Endothelial cell of umbilical vein (primary cell): ENCODE measurements at regions of chr21 and their contacts with region 1.

Region 1: DNA sequence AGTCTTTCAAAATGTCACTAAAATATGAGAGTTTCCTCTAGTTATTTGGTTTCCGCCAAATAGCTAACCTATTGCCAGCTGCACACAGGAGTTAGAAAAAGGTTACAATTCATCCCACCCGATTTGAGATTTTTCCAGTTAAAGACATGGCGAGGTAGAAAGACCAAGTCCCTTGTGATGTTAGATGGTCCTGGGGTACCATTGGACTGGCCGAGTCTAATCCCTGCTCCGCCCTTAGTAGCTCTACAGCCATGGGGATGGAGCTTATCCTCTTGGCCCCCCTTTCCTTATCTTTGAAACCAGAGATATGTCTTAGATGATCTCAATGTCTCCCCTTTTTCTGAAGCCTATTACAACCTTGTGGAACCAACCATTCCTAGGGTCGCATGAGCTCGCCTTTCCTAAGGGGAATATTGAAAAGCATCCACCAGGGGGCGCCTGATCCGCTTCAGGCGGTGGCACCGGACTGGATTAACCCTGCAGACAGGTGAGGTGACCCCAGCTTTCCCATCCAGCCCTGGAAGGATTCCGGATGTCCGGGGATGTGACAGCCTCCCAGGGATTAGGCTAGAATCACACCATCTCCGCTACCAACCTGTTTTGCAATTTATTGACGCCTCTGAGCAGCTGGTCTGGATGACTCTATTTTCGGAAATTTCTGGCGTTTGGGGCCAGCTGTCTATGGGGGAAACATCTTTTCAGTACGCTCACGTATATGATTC is 68.3 kb upstream of the SIM2 start:
- DNase-seq: peak; percentile 36
- H3K4me3 ChIP-seq: no peak overlapping the region
- H3K27ac ChIP-seq: no peak overlapping the region
- H3K4me1 ChIP-seq: no peaks in the 10 kb centered on the region
- H3K27me3 ChIP-seq: peaks cover 12 to 13% of the 10 kb centered on the region in 2 experiments
- CTCF ChIP-seq: peak; percentile 73 to 76
- POLR2A ChIP-seq: no peak

Region 2: DNA sequence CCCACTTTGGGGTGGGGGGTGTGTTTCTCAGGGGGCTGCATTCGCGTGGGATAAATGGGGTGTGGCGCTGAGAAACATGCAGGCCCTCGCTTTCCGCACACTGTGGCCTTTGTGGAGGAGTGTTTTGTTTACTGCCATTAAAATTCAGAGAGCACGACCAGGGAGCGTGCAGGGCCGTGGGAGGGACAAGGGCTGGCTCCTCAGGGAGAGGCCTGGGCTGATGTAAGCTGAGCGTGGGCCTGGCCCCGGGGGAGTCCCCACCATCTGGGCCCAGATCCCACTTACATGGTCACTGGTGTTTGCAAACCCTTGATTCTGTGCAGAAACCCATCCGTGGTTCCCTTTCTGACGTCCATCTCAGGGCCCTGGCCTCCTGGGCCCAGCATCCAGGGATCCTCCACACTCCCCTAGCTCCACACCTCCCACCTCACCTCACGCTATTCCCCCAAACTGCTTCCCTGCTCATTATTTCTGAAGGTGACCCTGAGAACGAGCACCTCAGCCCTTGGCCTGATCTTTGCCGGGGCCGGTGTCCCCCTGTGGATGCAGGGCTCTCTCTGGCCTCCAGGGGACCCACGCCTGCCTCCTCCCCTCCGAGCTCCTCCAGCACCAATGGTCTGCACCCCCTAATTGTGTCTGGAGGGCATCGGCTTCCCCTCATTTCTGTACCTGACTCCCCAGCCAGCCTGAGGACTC is 24.2 kb before region 1 on chr21:
- CTCF ChIA-PET with region 1: interaction called, 48 read pairs
- POLR2A ChIA-PET with region 1: no interaction called
- dilution Hi-C with region 1: no loop called
- intact Hi-C with region 1: no loop called
- DNase-seq: no peak
- H3K4me3 ChIP-seq: no peak overlapping the region
- H3K27ac ChIP-seq: no peak overlapping the region
- H3K4me1 ChIP-seq: peaks cover 3% of the 10 kb centered on the region
- H3K27me3 ChIP-seq: peaks cover under 1 to 5% of the 10 kb centered on the region in 2 experiments
- CTCF ChIP-seq: no peak
- POLR2A ChIP-seq: no peak

Region 3: DNA sequence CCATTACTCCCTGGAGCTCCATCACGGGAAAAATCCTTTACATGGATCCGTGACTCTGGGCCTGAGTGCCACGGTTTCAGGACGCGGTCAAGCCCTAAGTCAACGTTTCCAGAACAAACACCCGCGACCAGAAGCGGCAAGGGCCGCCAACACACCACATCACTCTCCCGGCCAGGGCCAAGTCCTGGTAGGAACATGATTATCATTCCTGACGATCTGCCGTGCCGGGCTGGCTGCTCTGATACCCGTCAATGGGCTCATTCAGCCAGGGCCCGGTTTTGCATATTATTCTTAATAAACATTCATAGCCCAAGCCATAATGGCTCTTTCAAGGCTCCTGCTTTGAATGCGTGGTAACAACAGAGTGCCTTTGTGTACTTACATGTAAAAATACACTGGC is 23.7 kb after region 1 on chr21:
- CTCF ChIA-PET with region 1: interaction called, 20 read pairs
- POLR2A ChIA-PET with region 1: no interaction called
- dilution Hi-C with region 1: no loop called
- intact Hi-C with region 1: no loop called
- DNase-seq: no peak
- H3K4me3 ChIP-seq: no peak overlapping the region
- H3K27ac ChIP-seq: no peak overlapping the region
- H3K4me1 ChIP-seq: no peaks in the 10 kb centered on the region
- H3K27me3 ChIP-seq: peaks cover 9 to 12% of the 10 kb centered on the region in 2 experiments
- CTCF ChIP-seq: no peak
- POLR2A ChIP-seq: no peak

Region 4: GRCh38 chr21:36698981-36699891 is 68.6 kb after region 1 on chr21 and contains the start of gene SIM2:
- CTCF ChIA-PET with region 1: interaction called, 10 read pairs
- POLR2A ChIA-PET with region 1: no interaction called
- dilution Hi-C with region 1: no loop called
- intact Hi-C with region 1: no loop called
- DNase-seq: no peak
- H3K4me3 ChIP-seq: peak within 1 kb of the TSS in 1 of 3 experiments; percentile 6
- H3K27ac ChIP-seq: no peak within 1 kb of the TSS
- H3K4me1 ChIP-seq: peaks cover 23% of the 10 kb centered on the region
- H3K27me3 ChIP-seq: peaks cover 88 to 98% of the 10 kb centered on the region in 2 experiments
- CTCF ChIP-seq: no peak
- POLR2A ChIP-seq: no peak
- total RNA-seq, gene SIM2: not detected in 2 replicates

Region 5: GRCh38 chr21:36854391-36854790 is 223.7 kb after region 1 on chr21:
- CTCF ChIA-PET with region 1: interaction called, 18 read pairs
- POLR2A ChIA-PET with region 1: no interaction called
- dilution Hi-C with region 1: no loop called
- intact Hi-C with region 1: loop called (anchors 1 kb)
- DNase-seq: peak; percentile 47
- H3K4me3 ChIP-seq: no peak overlapping the region
- H3K27ac ChIP-seq: no peak overlapping the region
- H3K4me1 ChIP-seq: peaks cover 4% of the 10 kb centered on the region
- H3K27me3 ChIP-seq: no peaks in the 10 kb centered on the region
- CTCF ChIP-seq: peak; percentile 64 to 68
- POLR2A ChIP-seq: no peak

Region 6: DNA sequence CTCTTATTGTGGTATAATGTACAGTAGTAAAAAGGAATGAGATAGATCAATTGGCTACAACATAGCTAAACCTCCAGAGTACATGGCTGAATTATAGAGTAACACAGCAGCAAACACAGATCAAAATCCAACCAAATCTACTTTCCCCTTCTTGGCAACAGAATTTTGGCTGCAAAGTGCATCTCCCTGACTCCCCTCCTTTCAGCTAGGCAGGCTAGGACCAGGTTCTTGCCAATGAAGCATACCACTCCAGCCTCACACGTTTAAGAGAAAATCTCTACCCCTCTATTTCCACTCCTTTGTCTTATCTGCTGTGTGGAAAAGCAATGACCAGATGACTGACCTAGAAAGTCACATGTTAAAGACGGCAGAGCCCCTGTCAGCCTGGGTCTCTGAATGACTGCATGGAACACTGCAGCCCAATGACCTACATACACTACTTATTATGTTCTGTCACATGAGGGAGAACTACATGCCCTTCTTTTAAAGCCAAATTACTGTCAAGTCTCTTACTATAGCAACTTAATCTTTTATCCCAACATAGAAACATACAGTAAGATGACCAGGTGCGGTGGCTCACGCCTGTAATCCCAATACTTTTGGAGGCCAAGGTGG is 236.8 kb after region 1 on chr21:
- CTCF ChIA-PET with region 1: no interaction called
- POLR2A ChIA-PET with region 1: no interaction called
- dilution Hi-C with region 1: no loop called
- intact Hi-C with region 1: no loop called
- DNase-seq: no peak
- H3K4me3 ChIP-seq: no peak overlapping the region
- H3K27ac ChIP-seq: no peak overlapping the region
- H3K4me1 ChIP-seq: no peaks in the 10 kb centered on the region
- H3K27me3 ChIP-seq: no peaks in the 10 kb centered on the region
- CTCF ChIP-seq: no peak
- POLR2A ChIP-seq: no peak